Activated CD4-positive, alpha-beta T cell treated with anti-CD3 and anti-CD28 coated beads for 36 hours (primary cell): ENCODE measurements at regions of chr11 and their contacts with region 1.

Region 1: DNA sequence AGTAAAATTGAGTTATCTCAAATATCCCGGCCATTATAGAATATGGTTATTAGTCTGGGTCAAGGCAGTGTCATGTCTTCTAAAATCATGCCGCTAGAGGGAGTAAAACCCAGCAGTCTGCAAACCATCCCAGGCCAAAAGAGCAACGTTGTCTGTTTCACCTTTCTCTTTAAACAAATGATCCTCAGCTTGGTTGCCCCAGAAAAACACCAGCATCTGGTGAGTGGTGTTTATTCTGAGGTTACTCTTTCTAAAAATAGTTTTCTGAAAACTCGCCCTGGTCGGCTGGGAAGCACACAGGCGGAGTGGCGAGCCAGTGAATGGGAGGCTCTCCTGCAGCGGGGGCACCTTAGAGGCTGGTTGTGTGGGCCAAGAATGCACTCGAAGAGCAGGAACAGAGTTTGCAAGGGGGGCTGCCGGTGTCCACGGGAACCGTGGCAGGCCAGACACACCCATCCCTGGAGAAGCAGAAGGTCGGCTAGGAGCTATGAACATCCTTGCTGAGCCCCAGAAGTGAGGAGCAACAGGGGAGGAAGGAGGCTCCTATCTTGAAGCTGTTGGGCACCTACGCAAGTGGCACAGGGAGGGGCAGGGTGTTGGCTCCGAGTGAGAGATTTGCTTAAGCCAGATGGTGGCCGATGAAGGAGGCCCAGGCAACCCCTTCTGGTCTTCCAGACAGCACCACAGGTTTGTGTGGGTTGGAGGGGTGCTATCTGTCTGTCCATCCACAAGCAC is 297.1 kb downstream of the ETS1 start:
- DNase-seq: peak; percentile 80
- ATAC-seq: peak; percentile 54
- H3K4me3 Mint-ChIP-seq: peak overlapping the region; percentile 78
- H3K27ac Mint-ChIP-seq: peak overlapping the region; percentile 98
- H3K4me1 Mint-ChIP-seq: peaks cover 98% of the 10 kb centered on the region
- H3K27me3 Mint-ChIP-seq: no peaks in the 10 kb centered on the region

Region 2: GRCh38 chr11:128195057-128195751 is 95.1 kb before region 1 on chr11:
- CTCF ChIA-PET with region 1: no interaction called
- POLR2A ChIA-PET with region 1: no interaction called
- intact Hi-C with region 1: loop called (anchors 2 kb)
- DNase-seq: peak; percentile 63
- ATAC-seq: peak; percentile 73
- H3K4me3 Mint-ChIP-seq: peak overlapping the region; percentile 10
- H3K27ac Mint-ChIP-seq: no peak overlapping the region
- H3K4me1 Mint-ChIP-seq: peaks cover 39% of the 10 kb centered on the region
- H3K27me3 Mint-ChIP-seq: no peaks in the 10 kb centered on the region

Region 3: DNA sequence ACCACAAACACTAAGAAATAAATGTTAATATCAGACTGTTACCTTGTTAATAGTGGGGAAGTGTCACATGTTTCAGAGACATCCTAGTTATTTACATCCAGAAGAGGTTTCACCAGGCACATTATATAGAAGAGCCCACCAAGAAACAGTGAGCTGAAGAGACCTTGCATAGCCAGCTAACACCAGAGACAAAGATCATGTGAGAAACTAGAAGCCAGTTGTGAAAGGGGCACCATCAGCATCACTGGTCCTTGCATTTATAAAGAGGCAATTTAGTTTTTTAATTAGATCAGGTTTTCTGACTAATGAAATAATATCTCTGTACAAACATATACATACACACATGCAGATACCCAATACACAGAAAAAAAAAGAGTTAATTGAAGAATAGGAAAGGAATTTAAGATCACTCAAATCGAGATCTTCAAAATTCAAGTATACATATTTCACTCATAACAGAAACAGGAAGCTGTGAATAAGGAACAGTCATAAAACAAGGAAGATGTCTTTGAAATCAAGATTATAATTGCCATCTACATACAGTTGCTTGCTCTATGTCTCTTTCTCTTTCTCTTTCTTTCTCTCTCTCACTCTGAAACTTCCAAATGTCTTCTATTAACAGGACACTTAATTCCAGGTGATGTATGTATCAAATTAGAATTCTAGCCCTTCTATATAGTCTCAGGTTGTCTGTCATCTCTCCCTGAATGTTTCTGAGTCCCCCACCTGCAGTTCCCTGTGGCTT is 51.6 kb before region 1 on chr11:
- CTCF ChIA-PET with region 1: interaction called, 4 read pairs
- POLR2A ChIA-PET with region 1: no interaction called
- intact Hi-C with region 1: loop called in 1 of 2 experiments (anchors 1 kb)
- DNase-seq: no peak
- ATAC-seq: peak; percentile 94
- H3K4me3 Mint-ChIP-seq: peak overlapping the region; percentile 39
- H3K27ac Mint-ChIP-seq: peak overlapping the region; percentile 84
- H3K4me1 Mint-ChIP-seq: peaks cover 34% of the 10 kb centered on the region
- H3K27me3 Mint-ChIP-seq: no peaks in the 10 kb centered on the region

Region 4: GRCh38 chr11:128342511-128343134 is 52.4 kb after region 1 on chr11:
- CTCF ChIA-PET with region 1: interaction called, 37 read pairs
- POLR2A ChIA-PET with region 1: interaction called, 17 read pairs
- intact Hi-C with region 1: loop called (anchors 1 kb)
- DNase-seq: peak; percentile 91
- ATAC-seq: peak; percentile 68
- H3K4me3 Mint-ChIP-seq: peak overlapping the region; percentile 65
- H3K27ac Mint-ChIP-seq: peak overlapping the region; percentile 95
- H3K4me1 Mint-ChIP-seq: peaks cover 97% of the 10 kb centered on the region
- H3K27me3 Mint-ChIP-seq: no peaks in the 10 kb centered on the region

Region 5: DNA sequence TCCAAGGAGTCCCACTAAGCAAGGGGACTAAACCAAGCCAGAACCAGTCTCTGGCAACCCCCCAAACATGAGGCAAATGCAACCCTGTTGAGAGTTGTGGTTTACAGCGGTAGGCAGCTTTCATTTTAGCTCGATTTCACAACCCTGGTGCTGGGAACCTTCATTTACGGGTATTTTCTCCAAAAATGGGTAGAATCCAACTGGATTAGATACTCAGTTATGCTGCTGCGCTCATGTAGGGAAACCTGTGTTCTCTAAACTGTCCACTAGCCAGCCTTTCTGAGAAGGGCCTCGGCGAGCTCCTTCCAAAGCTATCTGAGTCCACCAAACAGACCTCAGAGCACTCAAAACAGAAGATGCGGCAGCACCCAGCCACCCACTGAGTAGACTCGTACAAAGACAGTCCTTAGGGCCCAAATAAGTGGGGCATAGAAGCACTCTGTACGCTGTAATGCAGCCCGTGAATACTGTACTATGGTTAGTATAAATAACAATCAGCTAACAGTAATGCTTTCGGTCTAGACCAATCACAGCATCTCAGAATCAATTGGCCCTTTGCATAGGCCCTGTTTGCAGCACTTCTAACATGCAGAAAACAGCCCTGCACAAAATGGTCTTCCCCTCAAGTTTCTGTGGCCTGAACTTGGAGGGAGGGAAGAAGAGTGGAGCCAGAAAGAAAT is 192.4 kb after region 1 on chr11:
- CTCF ChIA-PET with region 1: interaction called, 5 read pairs
- POLR2A ChIA-PET with region 1: interaction called, 14 read pairs
- intact Hi-C with region 1: no loop called
- DNase-seq: peak; percentile 75
- ATAC-seq: peak; percentile 71
- H3K4me3 Mint-ChIP-seq: peak overlapping the region; percentile 63
- H3K27ac Mint-ChIP-seq: peak overlapping the region; percentile 98
- H3K4me1 Mint-ChIP-seq: peaks cover 96% of the 10 kb centered on the region
- H3K27me3 Mint-ChIP-seq: no peaks in the 10 kb centered on the region

Region 6: DNA sequence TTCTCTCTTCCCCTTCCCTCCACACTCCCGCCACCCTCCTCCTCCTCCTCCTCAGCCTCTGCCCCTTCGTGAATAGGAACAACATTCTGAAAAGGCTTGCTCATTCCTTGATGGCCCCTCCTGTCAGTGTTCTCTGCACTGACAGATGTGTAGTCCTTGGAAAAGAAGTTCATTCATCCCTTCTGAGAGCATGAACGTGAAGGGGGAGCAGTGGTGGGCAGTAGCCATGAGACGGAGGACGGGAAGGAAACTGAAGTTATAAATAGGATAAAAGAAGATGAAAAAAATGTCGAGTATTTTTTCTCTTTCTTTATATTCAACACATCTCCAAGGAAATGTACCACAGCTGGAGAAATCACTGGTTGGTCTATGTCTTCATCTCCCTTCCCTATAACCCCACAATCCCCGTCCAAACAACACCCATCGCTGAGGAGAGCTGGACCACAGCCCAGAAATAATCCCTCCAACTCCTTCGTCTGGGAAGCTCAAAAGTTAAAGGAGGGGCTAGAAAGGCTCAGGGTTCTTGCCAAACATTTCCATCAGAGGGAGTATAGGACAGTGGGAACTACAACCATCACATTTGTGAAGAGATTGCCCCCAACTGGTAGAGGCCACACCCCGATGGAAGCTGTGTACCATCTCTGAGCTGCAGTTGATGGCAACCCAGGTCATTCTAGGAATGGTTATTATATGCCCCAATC is 263.5 kb after region 1 on chr11:
- CTCF ChIA-PET with region 1: no interaction called
- POLR2A ChIA-PET with region 1: interaction called, 3 read pairs
- intact Hi-C with region 1: loop called in 1 of 2 experiments (anchors 1 kb)
- DNase-seq: no peak
- ATAC-seq: no peak
- H3K4me3 Mint-ChIP-seq: no peak overlapping the region
- H3K27ac Mint-ChIP-seq: peak overlapping the region; percentile 94
- H3K4me1 Mint-ChIP-seq: peaks cover 56% of the 10 kb centered on the region
- H3K27me3 Mint-ChIP-seq: no peaks in the 10 kb centered on the region

Region 7: DNA sequence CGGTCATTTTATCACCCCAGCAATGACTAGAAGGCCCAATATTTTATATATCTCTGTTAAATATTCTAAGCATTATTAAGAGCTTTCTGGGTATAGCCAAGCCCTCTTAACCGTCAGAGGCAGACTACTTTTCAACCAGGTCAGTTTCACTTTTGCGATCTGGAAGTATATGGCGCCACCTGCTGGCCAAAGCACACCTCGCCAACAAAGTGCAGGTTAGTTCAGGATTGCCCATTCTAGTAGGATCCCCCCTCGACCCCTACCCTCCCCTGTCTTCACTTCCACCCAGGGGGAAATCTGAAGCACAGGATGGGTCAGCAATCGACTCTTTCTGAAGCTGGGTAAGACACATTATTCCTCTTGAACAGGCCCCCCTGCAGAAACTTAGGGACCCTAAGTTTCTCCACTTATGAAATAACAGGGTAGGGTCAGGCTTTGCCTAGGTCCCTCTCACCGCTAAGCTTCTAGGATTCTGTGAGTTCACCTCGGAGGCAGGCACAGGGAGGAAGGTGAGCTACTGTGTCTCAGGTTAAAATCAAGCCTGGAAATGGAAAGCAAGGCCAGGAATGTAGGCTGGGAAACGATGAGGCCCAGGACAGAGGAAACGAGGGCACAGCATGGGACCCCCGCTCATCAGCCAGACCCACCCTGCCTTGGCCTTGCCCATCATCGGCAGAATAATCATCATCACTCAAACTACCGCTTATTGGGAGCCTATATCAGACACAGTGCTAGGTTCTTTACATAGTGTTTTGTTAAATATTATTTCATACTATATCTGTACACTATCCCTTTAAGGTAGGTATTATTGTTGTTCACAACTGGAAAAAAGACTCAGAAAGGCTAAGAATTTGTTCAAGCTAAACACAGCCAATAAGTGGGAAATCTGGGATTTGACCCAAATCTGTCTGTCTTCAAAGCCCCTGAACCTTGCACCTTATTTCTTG is 541.2 kb after region 1 on chr11:
- CTCF ChIA-PET with region 1: interaction called, 3 read pairs
- POLR2A ChIA-PET with region 1: no interaction called
- intact Hi-C with region 1: loop called (anchors 2 kb)
- DNase-seq: peak; percentile 93
- ATAC-seq: peak; percentile 81
- H3K4me3 Mint-ChIP-seq: peak overlapping the region; percentile 57
- H3K27ac Mint-ChIP-seq: peak overlapping the region; percentile 93
- H3K4me1 Mint-ChIP-seq: peaks cover 21% of the 10 kb centered on the region
- H3K27me3 Mint-ChIP-seq: no peaks in the 10 kb centered on the region